ENCODE measurements at regions of chr11 and their contacts with region 1.

Region 1: DNA sequence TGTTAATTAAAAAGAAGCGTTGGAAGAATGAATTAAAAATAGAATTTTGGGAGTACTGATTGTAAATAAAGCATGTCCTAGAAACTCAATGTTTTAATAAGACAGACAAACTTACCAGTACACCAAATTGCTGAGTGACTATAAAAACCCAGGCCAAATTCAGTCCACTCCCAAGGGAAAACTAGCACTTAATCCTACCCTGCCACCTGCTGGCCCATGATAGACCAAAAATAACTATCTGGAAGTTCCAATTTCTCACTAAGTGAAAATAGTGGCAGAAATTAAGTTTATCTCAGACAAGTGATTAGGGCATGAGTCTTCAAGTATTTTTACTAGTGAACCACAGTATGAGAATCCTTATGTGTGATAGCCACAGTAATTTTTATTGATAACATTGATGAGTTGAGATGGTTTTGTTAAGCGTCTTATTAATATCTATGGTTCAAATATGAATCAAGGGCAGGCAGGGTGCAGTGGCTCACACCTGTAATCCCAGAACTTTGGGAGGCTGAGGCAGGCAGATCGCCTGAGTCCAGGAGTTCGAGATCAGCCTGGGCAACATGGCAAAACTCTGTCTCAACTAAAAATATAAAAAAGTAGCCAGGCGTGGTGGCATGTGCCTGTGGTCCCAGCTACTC is 9.8 kb upstream of the DDX10 start:
- DNase-seq: no peak
- ATAC-seq: peak; percentile 85
- H3K4me3 ChIP-seq: no peak overlapping the region
- H3K27ac ChIP-seq: no peak overlapping the region
- H3K4me1 ChIP-seq: no peaks in the 10 kb centered on the region
- H3K27me3 ChIP-seq: no peaks in the 10 kb centered on the region
- CTCF ChIP-seq: peak; percentile 49 to 77 (median 56)
- EP300 ChIP-seq: no peak
- POLR2A ChIP-seq: no peak
- RAD21 ChIP-seq: peak; percentile 85

Region 2: DNA sequence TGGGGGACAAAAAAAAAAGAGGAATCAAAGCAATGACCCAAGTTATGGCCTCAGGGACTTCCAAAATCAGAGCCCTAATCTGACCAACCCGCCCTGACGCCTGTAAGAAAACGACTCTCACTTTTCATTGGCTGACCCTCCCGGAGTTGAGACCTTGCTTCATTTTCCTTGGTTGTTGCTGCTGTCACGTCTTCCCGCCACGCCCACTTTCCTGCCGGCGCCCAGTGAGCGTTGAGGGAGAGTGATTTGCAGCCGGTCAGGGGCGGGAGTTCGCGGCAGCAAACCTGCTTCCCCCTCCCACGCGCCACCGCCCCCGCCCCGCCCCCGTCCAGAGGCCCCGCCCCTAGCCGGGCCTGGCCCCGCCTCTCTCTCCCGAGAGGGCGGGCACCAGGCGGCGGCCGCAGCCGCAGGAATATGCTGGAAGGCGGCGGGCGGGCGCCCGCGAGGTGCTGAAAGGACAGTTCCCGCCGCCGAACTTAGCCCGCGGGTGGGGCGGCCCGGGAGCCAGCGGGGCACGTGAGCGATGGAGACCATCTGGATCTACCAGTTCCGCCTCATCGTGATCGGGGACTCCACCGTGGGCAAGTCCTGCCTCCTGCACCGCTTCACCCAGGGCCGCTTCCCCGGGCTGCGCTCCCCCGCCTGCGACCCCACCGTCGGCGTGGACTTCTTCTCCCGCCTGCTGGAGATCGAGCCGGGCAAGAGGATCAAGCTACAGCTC is 726.9 kb before region 1 on chr11 and contains the start of gene RAB39A:
- CTCF ChIA-PET with region 1: no interaction called
- POLR2A ChIA-PET with region 1: no interaction called
- RAD21 ChIA-PET with region 1: no interaction called
- SMC1A ChIA-PET with region 1: no interaction called
- in situ Hi-C with region 1: no loop called
- intact Hi-C with region 1: loop called (anchors 10 kb)
- DNase-seq: peak; percentile 95
- ATAC-seq: peak; percentile 96
- H3K4me3 ChIP-seq: peak within 1 kb of the TSS; percentile 94
- H3K27ac ChIP-seq: peak within 1 kb of the TSS; percentile 69
- H3K4me1 ChIP-seq: peaks cover 13% of the 10 kb centered on the region; the same call in 1 of the 2 replicates
- H3K27me3 ChIP-seq: no peaks in the 10 kb centered on the region
- CTCF ChIP-seq: no peak
- EP300 ChIP-seq: no peak
- POLR2A ChIP-seq: peak; percentile 58; the same call in 1 of the 2 replicates
- RAD21 ChIP-seq: no peak
- polyA plus RNA-seq, gene RAB39A: 0.10 to 0.18 TPM

Region 3: GRCh38 chr11:108121274-108122155 is 533.6 kb before region 1 on chr11 and contains the start of gene ACAT1:
- CTCF ChIA-PET with region 1: interaction called, 7 read pairs
- POLR2A ChIA-PET with region 1: interaction called, 3 read pairs
- RAD21 ChIA-PET with region 1: interaction called, 4 read pairs
- SMC1A ChIA-PET with region 1: interaction called, 20 read pairs
- in situ Hi-C with region 1: loop called (anchors 5 kb)
- intact Hi-C with region 1: loop called (anchors 5 kb)
- DNase-seq: peak; percentile 71
- ATAC-seq: peak; percentile 98
- H3K4me3 ChIP-seq: peak within 1 kb of the TSS; percentile 73
- H3K27ac ChIP-seq: peak within 1 kb of the TSS; percentile 65
- H3K4me1 ChIP-seq: peaks cover 10% of the 10 kb centered on the region
- H3K27me3 ChIP-seq: no peaks in the 10 kb centered on the region
- CTCF ChIP-seq: peak; percentile 7 to 39 (median 10); a peak in 1 of 6 replicates
- EP300 ChIP-seq: no peak
- POLR2A ChIP-seq: peak; percentile 98
- RAD21 ChIP-seq: no peak
- polyA plus RNA-seq, gene ACAT1: 58.2 to 93.5 TPM